OCI-LY7 (cell line): ENCODE measurements at regions of chr10 and their contacts with region 1.

Region 1: DNA sequence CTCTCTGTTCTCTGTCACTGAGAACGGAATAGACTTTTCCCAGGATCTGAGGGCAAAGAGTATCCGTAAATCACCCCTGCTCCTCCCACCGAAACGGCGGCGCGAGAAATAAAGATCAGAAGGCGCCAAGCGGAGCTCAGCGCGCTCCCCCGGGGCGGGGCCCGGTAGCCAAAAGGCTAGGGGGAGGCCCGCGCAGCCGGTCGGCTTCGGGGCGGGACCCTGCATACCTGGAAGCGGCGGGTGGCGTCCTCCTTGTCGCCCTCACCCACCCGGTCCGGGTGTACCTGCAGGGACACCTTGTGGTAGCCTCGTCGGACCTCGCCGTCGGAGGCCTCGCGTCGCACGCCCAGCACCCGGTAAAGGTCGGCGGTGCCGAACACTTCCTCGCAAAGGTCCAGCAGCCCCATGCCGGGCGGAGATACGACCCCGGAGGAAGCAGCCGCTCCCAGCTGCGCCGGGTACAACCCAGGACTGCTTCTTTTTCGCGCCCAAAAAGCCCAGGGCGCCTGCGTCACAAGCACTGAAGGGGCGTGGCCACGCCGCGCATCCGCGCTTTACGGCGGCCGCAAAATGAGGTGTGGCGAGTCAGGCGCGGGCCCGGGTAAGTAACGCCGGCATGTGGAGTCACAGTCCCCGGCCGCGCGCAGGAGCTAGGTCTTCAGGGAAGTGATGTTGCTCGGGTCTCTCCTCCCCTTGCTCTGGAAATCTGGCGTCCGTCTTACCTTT is at the start of gene DNAJC9:
- DNase-seq: peak; percentile 98
- H3K4me3 ChIP-seq: peak within 1 kb of the TSS; percentile 94
- H3K27ac ChIP-seq: peak within 1 kb of the TSS; percentile 91
- H3K4me1 ChIP-seq: peaks cover 58% of the 10 kb centered on the region
- CTCF ChIP-seq: no peak
- total RNA-seq, gene DNAJC9: 83.3 and 94.2 TPM in 2 replicates

Region 2: DNA sequence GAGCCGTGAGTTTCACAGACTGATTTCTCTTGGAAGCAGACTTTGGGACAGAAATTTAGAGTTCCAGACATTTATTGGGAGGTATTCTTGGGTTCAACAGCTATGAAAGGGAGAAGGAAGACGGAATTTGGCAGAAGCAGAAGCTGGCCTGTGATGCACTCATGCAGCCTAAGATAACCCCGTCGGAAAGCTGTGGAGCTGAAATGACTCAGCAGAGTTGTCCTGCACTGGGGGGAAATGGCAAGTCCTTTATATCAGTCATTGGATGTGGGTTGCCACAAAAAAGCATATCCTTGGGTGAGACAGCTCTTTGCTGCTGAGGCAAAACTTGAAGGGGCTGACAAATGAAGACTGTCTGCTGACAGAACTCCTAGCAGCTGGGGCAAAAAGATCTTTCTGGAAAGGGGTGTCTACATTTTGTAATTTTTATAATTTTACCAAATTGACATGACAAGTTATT is 609.5 kb before region 1 on chr10:
- CTCF ChIA-PET with region 1: no interaction called
- POLR2A ChIA-PET with region 1: no interaction called
- intact Hi-C with region 1: no loop called
- DNase-seq: no peak
- H3K4me3 ChIP-seq: no peak overlapping the region
- H3K27ac ChIP-seq: no peak overlapping the region
- H3K4me1 ChIP-seq: no peaks in the 10 kb centered on the region
- CTCF ChIP-seq: no peak

Region 3: GRCh38 chr10:73167783-73168464 is 79.0 kb before region 1 on chr10 and contains the starts of genes ECD and FAM149B1:
- CTCF ChIA-PET with region 1: no interaction called
- POLR2A ChIA-PET with region 1: no interaction called
- intact Hi-C with region 1: loop called (anchors 5 kb)
- DNase-seq: peak; percentile 94
- H3K4me3 ChIP-seq: peak within 1 kb of the TSS; percentile 86
- H3K27ac ChIP-seq: peak within 1 kb of the TSS; percentile 51
- H3K4me1 ChIP-seq: peaks cover 5% of the 10 kb centered on the region
- CTCF ChIP-seq: peak; percentile 35; the same call in 1 of the 2 replicates
- total RNA-seq, gene ECD: 24.6 and 27.3 TPM in 2 replicates
- total RNA-seq, gene FAM149B1: 8.0 and 14.7 TPM in 2 replicates

Region 4: DNA sequence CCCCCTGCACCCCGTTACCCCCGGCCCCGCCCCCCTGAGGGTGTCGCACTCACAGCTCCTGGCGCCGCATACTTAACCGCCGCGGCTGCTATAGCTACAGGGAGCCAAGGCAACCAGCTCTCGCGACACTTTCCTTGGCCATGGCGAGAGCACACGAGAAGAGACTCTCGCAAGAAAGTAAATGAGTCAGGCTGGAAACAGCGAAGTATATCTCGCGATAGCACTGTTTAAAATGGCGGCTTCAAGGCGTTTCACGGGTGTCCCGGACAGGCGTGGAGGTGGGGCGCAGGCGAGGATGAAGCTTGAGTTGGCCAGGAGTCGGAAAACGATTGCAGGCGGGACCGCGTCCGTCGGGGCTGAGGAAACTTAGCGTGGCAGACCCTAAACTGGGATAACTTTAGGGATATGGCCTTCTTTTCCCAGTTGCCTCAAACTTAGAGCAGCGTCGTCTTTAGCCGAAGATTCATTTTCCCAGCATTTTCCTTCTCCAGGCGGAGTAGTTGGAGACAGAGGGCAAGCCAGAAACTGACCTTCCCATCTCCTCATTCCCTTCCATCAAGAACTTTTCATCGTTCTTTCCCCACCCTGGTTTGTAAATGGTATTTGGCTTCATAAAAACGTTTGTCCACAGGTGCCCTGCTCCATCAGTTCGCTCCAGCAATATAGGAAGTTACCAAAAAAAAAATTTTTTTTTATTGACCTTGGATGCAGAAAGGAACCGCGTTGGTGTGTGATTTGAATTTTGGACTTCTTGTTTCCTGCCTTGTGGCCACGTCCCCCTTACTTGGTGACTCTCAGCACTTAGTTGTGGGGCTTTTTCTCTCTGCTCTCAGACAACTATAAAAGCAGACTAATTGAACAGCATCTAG is 379.2 kb after region 1 on chr10:
- CTCF ChIA-PET with region 1: no interaction called
- POLR2A ChIA-PET with region 1: interaction called, 4 read pairs
- intact Hi-C with region 1: loop called (anchors 1 kb)
- DNase-seq: peak; percentile 98
- H3K4me3 ChIP-seq: peak overlapping the region; percentile 76
- H3K27ac ChIP-seq: peak overlapping the region; percentile 28
- H3K4me1 ChIP-seq: peaks cover 17% of the 10 kb centered on the region
- CTCF ChIP-seq: no peak

Region 5: GRCh38 chr10:73730153-73730906 is 483.4 kb after region 1 on chr10:
- CTCF ChIA-PET with region 1: no interaction called
- POLR2A ChIA-PET with region 1: no interaction called
- intact Hi-C with region 1: loop called (anchors 2 kb)
- DNase-seq: peak; percentile 92
- H3K4me3 ChIP-seq: peak overlapping the region; percentile 78
- H3K27ac ChIP-seq: peak overlapping the region; percentile 56
- H3K4me1 ChIP-seq: peaks cover 10% of the 10 kb centered on the region
- CTCF ChIP-seq: no peak